AG04449 (cell line): ENCODE measurements at regions of chr9 and their contacts with region 1.

Region 1: DNA sequence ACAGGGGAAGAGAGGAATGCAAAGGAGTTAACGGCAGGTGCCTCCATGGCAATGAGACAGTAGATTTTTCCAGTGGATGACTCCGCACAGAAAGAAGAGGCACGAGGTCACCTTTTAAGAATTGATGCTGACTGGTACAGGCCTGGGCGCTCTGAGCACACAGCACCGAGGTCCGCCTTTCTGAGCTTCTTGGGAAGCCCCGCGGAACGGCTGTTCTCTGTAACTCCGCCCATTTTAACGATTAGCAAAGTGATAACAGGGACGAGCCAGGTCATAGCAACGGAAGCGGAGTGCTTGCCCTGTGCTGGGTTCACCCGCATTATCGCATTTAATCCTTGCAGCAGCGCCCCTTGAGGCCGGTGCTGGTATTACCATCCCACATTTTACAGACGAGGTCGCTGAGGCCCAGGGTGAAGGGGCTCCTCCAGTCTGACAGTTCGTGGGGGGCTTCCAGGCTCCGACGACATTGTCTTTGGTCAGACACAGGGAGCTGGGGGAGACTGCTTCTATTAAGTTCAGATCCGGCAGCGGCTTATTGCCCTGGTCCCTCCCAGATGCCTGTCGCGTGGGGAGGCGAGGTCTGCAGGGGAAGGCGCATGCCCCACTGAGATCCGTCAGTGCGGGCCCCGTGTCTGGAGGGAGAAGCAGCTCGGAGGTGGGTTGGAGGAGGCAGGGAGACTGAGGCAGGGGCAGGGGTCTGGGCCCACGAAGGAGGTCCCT is 22.4 kb upstream of the HMCN2 start:
- DNase-seq: no peak
- H3K4me3 ChIP-seq: no peak overlapping the region; the same call in 1 of the 2 replicates
- CTCF ChIP-seq: peak; percentile 87

Region 2: GRCh38 chr9:130107234-130107861 is 135.8 kb before region 1 on chr9:
- CTCF ChIA-PET with region 1: interaction called, 384 read pairs
- POLR2A ChIA-PET with region 1: no interaction called
- DNase-seq: no peak
- H3K4me3 ChIP-seq: no peak overlapping the region
- CTCF ChIP-seq: peak; percentile 71

Region 3: GRCh38 chr9:130186839-130187522 is 56.2 kb before region 1 on chr9:
- CTCF ChIA-PET with region 1: interaction called, 10 read pairs
- POLR2A ChIA-PET with region 1: no interaction called
- DNase-seq: no peak
- H3K4me3 ChIP-seq: peak overlapping the region; percentile 40
- CTCF ChIP-seq: no peak

Region 4: GRCh38 chr9:130220352-130220751 is 22.8 kb before region 1 on chr9:
- CTCF ChIA-PET with region 1: interaction called, 11 read pairs
- POLR2A ChIA-PET with region 1: no interaction called
- DNase-seq: no peak
- H3K4me3 ChIP-seq: no peak overlapping the region; the same call in 1 of the 2 replicates
- CTCF ChIP-seq: peak; percentile 58

Region 5: DNA sequence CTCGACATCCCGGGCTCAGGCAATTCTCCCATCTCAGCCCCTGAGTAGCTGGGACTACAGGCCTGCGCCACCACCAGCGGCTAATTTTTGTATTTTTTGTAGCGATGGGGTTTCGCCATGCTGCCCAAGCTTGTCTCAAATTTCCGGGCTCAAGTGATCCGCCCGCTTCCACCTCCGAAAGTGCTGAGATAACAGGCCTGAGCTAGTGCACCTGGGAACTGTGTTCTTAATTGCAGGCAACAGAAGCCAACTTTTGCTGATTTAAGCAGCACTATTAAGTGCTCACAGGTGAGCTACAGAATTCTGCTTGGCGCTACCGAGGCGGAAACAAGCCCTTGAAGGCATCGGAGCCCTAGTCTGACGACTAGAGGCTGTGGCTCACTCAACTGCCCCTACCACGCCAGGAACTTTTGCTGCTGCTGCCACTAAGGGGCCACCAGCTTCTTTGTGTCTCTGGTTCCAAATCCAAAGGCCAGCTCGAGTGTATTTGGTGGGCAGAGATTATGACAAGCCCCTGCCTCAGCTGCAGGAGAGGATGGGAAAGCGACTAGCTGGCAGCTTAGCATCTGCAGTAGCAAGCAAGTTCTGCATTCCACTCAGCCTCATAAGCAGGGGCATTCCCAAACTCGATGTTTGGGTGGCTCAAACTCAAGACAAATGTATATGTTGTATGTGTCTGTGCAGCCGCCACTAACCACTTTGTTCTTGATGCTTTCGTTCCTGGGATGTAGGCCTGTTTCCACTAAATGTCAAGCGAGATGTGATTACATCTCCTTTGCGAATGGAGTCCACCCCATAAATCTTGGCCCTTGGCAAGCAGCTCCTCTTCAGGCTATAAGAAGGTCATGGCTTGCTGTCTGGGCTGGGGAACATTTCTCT is 11.8 kb after region 1 on chr9:
- CTCF ChIA-PET with region 1: interaction called, 147 read pairs
- POLR2A ChIA-PET with region 1: no interaction called
- DNase-seq: no peak
- H3K4me3 ChIP-seq: no peak overlapping the region
- CTCF ChIP-seq: no peak

Region 6: DNA sequence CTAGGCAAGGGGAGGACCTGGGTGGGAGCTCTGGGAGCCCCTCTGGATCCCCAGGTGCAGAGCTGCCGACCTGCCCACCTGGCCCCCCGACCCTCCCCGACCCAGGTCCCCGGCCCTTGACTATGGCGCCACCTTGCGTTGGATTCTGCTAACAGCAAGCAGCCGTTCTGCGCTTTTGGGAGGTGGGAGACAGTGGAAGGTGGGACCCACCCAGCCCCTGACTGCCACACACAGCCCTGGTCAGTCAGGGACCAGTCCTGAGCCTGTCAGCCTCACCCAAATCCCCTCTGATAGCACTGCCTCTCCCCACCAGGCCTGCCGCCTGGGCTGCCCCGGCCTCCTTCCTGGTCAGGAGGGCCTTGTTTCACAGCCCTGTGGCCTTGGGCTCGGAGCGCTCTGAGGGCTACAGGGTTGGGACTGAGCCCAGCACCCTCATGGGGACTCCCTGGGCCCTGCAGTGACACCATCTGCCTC is 100.3 kb after region 1 on chr9:
- CTCF ChIA-PET with region 1: interaction called, 34 read pairs
- POLR2A ChIA-PET with region 1: no interaction called
- DNase-seq: no peak
- H3K4me3 ChIP-seq: no peak overlapping the region
- CTCF ChIP-seq: peak; percentile 86

Region 7: GRCh38 chr9:130453487-130453886 is 210.3 kb after region 1 on chr9:
- CTCF ChIA-PET with region 1: no interaction called
- POLR2A ChIA-PET with region 1: no interaction called
- DNase-seq: no peak
- H3K4me3 ChIP-seq: no peak overlapping the region
- CTCF ChIP-seq: no peak